Activated T-helper 1 cell treated with anti-CD3 and anti-CD28 coated beads, Interleukin-12 subunit alpha, Interleukin-12 subunit beta, Interleukin-2, Interleukin-4 antibody, amounts not matched to agents 30 ng/mL and 10 ng/mL and 1 ng/mL, durations not matched to agents 14 hours and 24 hours and 36 hours (primary cell): ENCODE measurements at regions of chr5 and their contacts with region 1.

Region 1: DNA sequence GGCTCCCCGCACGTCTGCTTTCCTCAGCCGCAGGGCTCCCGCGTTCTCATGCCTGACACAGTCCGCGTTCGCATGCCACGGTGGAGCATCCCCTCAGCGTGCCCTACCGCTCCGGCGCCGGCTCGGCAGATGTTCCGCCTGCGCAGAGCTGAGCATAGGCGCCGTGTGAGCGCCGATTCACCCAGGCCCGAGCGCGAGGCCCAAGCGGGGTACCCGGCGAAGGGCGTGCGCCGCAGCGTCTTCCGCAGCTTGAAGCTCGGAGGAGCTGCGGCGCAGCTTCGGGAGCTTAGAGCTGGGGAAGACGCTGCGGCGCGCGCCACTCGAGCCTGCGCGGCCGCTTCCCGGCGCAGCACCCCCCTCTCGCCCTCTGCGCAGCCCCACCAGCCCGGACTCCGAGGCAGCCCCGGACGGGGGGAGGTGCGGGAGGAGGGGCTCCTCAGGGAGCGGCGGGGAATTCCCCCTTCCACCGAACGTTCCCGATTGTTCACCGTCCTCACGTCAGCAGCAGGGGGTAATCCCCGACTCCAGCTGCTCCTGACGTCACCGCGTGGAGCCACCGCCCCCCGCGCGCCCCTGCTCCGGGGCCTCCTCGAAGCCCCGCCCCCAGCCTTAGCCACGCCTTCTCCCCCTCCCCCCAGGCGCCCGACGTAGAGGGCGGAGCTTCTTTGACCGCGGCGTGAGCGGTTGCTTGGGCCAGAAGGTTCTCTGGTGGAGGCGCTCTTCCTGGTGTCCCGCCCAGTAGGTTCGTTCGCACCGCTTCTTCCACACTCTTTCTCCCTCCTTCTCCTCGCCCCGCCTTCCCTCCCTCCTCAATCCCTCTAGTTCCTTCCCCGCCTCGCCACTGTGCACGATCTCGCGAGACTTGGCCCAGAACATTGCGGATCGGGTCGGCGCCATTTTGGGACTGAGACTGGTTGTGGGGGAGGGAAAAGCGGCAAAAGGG is at the start of gene GPBP1:
- DNase-seq: peak; percentile 97
- H3K4me3 Mint-ChIP-seq: peak within 1 kb of the TSS; percentile 96
- H3K27ac Mint-ChIP-seq: peak within 1 kb of the TSS; percentile 97
- H3K4me1 Mint-ChIP-seq: peaks cover 47% of the 10 kb centered on the region
- H3K27me3 Mint-ChIP-seq: no peaks in the 10 kb centered on the region
- total RNA-seq, gene GPBP1: 94.6 and 106 TPM in 2 replicates

Region 2: GRCh38 chr5:55307383-55308253 is 1865.8 kb before region 1 on chr5 and contains the starts of genes DHX29 and MTREX:
- intact Hi-C with region 1: loop called (anchors 5 kb)
- DNase-seq: peak; percentile 89
- H3K4me3 Mint-ChIP-seq: no peak within 1 kb of the TSS
- H3K27ac Mint-ChIP-seq: no peak within 1 kb of the TSS
- H3K4me1 Mint-ChIP-seq: peaks cover 19% of the 10 kb centered on the region
- H3K27me3 Mint-ChIP-seq: no peaks in the 10 kb centered on the region
- total RNA-seq, gene DHX29: 20.3 and 22.3 TPM in 2 replicates
- total RNA-seq, gene MTREX: 110 and 122 TPM in 2 replicates

Region 3: GRCh38 chr5:56148453-56148971 is 1024.9 kb before region 1 on chr5:
- intact Hi-C with region 1: loop called (anchors 10 kb)
- DNase-seq: peak; percentile 43
- H3K4me3 Mint-ChIP-seq: peak overlapping the region; percentile 23
- H3K27ac Mint-ChIP-seq: peak overlapping the region; percentile 81
- H3K4me1 Mint-ChIP-seq: peaks cover 60% of the 10 kb centered on the region
- H3K27me3 Mint-ChIP-seq: no peaks in the 10 kb centered on the region

Region 4: DNA sequence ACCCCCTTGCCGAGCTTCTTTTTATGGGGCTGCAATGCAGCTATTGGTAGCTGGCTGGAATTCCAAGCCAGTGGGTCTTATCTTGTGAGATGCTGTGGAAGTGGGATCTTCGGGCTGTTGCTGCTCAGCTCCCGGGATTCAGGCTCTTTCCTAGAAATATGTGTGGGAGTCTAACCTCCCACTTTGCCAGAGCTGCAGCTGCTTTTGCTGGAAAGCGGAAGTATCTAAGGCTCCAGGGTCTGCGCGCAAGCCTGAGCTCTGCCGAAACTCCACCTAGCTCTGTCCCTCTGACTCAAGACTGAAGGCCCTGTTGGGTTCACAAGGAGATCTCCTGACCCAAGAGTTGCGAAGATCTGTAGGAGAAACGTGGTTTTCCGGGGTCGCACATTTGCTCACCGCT is 789.3 kb before region 1 on chr5:
- intact Hi-C with region 1: no loop called
- DNase-seq: no peak
- H3K4me3 Mint-ChIP-seq: no peak overlapping the region
- H3K27ac Mint-ChIP-seq: no peak overlapping the region
- H3K4me1 Mint-ChIP-seq: no peaks in the 10 kb centered on the region
- H3K27me3 Mint-ChIP-seq: no peaks in the 10 kb centered on the region

Region 5: DNA sequence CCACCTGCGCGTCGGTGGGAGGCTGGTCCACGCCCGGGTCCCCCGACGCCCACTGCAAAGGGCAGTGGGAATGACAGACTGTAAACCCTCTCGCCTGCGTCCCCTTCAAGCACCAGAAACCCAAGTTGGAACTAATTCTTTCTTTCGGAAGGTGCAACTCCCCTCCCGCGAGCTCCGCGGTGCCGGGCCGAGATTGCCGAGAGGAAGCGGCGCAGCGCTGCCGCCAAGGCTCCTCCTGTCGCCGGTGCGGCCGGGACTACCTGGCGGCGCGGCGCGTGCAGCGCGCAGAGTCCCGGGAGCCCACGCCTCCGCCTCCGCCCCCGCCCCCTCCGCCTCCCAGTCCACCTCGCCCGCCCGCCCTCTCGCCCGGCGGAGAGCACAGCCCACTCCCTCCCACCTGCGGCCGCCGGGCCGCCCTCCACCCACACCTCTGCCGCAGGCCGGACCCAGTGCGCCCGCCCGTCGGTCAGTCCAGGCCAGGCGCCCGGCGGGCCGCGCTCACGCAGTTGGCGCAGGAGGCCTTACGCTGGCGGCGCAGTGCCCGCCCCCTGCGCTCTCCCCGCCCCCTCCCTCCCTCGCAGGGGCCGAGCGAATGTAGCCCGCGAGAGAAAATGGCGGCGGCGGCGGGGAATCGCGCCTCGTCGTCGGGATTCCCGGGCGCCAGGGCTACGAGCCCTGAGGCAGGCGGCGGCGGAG is 358.3 kb before region 1 on chr5 and contains the start of gene MAP3K1:
- intact Hi-C with region 1: loop called (anchors 2 kb)
- DNase-seq: peak; percentile 72
- H3K4me3 Mint-ChIP-seq: peak within 1 kb of the TSS; percentile 91
- H3K27ac Mint-ChIP-seq: peak within 1 kb of the TSS; percentile 82
- H3K4me1 Mint-ChIP-seq: peaks cover 48% of the 10 kb centered on the region
- H3K27me3 Mint-ChIP-seq: peaks cover 2% of the 10 kb centered on the region
- total RNA-seq, gene MAP3K1: 23.6 and 25.3 TPM in 2 replicates

Region 6: DNA sequence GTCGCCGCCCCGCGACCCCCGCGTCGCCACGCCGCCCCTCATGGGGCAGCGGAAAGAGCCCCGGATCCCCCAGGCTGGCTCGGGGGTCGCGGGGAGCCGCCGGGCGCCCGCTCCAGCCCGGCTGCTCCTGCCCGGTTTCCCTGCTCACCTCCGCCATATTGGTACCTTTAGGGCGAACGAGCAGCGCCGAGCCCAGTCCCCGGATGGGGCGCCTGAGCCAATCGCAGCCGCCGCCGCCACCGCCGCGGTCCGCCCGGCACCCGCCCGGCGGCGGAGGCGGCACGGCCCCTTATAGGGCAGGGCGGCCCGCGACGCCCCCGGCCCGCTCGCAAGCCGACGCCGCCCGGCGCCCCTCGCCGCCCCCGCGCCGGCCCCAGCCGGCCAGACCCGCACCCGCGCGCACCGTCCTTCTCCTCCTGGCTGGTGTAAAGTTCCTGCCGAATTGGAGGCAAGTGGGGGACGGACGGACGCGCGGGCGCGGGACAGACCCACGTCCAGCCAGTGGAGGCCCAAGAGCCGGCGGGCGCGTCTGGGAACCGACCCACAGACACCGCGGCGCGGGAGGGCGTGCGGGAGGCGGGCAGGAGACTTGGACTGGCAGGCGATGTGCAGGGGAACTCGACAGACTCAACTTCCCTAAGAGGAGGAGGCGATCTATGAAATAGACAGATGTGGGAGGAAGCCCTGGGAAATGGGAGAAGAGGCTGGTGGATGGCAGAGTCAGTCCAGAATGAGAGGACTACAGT is 221.3 kb before region 1 on chr5 and contains the start of gene MIER3:
- intact Hi-C with region 1: loop called (anchors 1 kb)
- DNase-seq: peak; percentile 82
- H3K4me3 Mint-ChIP-seq: peak within 1 kb of the TSS; percentile 95
- H3K27ac Mint-ChIP-seq: peak within 1 kb of the TSS; percentile 45
- H3K4me1 Mint-ChIP-seq: peaks cover 23% of the 10 kb centered on the region
- H3K27me3 Mint-ChIP-seq: peaks cover 24% of the 10 kb centered on the region
- total RNA-seq, gene MIER3: 33.6 and 35.9 TPM in 2 replicates

Region 7: GRCh38 chr5:57221049-57221568 is 47.7 kb after region 1 on chr5:
- intact Hi-C with region 1: loop called (anchors 1 kb)
- DNase-seq: peak; percentile 17
- H3K4me3 Mint-ChIP-seq: no peak overlapping the region
- H3K27ac Mint-ChIP-seq: no peak overlapping the region
- H3K4me1 Mint-ChIP-seq: peaks cover 18% of the 10 kb centered on the region
- H3K27me3 Mint-ChIP-seq: no peaks in the 10 kb centered on the region

Region 8: DNA sequence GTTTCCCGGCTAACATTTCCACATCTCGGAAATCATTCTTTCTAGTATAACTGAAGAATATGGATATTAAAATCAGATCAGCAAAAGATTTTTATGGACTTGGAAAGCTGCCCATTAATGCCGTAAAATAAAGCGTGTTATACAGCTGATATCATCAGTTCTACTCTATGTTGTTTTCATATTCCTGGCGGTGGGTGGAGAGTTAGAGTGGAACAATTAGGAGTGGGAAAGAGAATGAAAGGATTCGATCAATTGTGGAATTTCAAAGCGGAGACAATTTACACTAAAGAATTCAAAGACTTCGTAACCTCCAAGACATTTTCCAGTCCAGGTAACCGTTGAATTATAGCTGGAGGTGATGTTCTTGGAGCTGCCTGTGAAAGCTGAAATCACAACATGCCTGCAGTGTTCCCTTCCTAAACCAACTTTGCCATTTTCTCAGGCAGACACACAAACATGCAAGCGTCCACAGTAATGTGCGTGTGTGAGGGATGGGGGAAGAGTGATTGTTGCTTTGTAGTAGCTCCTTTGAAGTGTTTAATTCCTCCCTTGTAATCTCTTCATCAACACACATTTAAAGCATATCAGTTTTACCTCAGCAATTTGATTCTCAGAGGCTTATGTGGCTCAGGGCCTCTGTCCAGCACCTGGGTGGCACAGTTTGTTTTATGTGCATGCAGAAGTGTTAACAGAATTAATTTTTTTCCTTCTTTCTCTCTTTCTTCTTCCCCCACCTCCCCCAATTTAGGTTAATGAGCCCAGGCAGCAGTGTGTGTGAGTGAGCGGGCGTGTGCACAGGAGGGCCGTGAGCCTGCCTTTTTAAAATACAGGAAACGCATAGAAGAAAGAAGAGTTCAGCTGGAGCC is 1953.5 kb after region 1 on chr5:
- intact Hi-C with region 1: loop called (anchors 10 kb)
- DNase-seq: no peak
- H3K4me3 Mint-ChIP-seq: no peak overlapping the region
- H3K27ac Mint-ChIP-seq: no peak overlapping the region
- H3K4me1 Mint-ChIP-seq: peaks cover 14% of the 10 kb centered on the region
- H3K27me3 Mint-ChIP-seq: no peaks in the 10 kb centered on the region